Prostate gland (tissue), 2 donors: ENCODE measurements at regions of chr16 and their contacts with region 1.

Region 1: DNA sequence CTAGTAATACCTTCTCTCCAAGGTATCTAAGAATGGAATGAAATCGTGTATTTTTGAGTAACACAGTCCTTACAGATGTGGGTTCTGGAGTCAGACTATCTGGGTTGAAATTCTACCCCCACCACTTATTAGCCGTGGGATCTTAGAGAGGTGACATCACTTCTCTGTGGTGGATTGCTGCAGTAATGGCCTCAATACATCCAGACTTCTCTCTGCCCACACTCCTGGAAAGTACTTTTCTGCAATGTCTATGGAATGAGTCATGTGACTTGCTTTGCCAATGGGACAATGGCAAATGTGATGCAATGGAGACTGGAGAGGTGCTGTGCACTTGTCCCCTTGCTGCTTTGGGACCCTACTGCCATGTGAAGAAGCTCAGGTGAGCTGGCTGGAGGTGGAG is 418.2 kb downstream of the HAPSTR1 start:
- DNase-seq: no peak
- H3K4me3 ChIP-seq: no peak overlapping the region
- H3K27ac ChIP-seq: no peak overlapping the region
- H3K4me1 ChIP-seq: no peaks in the 10 kb centered on the region
- H3K27me3 ChIP-seq: no peaks in the 10 kb centered on the region
- CTCF ChIP-seq: no peak
- POLR2A ChIP-seq: no peak

Region 2: GRCh38 chr16:9412915-9413264 is 96.8 kb before region 1 on chr16:
- intact Hi-C with region 1: loop called (anchors 5 kb)
- DNase-seq: no peak
- H3K4me3 ChIP-seq: no peak overlapping the region
- H3K27ac ChIP-seq: no peak overlapping the region
- H3K4me1 ChIP-seq: no peaks in the 10 kb centered on the region
- H3K27me3 ChIP-seq: peaks cover 3% of the 10 kb centered on the region
- CTCF ChIP-seq: no peak
- POLR2A ChIP-seq: no peak

Region 3: DNA sequence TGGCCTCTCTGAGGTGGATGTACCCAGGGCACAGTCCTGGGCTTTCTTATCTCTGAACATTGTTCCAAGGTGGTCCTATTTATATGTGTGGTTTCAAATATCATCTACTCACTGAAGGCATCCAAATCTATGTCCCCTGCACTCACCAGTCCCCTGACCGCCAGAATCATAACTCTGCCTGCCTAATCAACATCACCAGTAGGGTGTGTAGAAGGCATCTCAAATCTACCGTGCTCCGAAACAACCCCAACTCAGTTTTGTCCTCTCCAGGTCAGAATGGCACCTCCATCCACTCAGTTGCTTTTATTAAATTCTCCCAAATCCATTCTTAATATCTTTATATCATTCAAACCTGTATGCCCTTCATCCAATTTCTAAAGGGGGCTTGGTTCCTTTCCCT is 136.2 kb after region 1 on chr16:
- intact Hi-C with region 1: no loop called
- DNase-seq: no peak
- H3K4me3 ChIP-seq: no peak overlapping the region
- H3K27ac ChIP-seq: no peak overlapping the region
- H3K4me1 ChIP-seq: no peaks in the 10 kb centered on the region
- H3K27me3 ChIP-seq: no peaks in the 10 kb centered on the region
- CTCF ChIP-seq: no peak
- POLR2A ChIP-seq: no peak